ENCODE measurements at regions of chr3 and their contacts with region 1.

Region 1: DNA sequence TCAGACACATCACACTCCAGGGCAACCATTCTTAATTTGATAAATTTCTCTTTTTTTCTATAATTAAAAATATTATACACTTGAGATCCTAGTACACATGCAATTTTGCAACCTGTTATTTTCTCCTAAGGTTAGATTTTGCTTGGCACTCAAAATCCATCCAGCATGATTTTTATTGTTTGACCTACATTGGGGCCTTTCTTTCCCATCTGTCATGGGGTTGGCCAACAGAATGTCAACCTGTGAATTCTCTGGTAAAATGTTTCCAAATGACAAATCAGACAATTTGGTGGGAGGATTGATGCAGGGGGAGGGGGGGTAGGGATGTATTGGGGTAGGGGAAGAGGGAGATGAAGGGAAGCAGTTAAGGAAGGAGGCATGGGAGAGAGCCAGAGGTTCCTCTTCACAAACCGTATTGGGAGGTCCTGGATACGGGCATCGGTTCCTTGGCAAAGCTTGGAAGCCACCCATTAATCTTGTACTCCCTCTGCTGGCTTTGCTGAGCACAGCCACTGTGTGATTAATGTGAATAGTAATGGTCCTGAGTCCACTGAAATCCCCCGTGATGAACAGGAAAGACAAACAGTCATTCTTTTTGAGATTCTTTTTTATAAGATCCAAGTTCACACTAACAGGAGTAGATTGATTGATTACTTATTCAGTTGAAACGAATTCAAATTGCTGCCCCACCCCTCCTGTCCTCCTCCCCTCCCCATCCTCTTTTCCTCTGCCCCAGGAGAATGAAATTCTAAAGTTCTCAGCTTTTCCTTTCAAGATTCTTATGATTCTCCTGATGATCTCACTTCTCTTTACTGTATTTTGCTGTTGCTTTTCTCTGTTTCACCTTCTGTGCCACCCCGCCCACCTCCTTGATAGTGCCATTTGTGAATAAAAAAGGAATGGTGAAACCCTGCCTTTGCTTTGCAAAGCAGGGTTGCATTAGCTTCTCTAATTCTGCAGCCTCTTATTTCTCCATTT is 82.2 kb upstream of the SLC25A26 start:
- DNase-seq: peak; percentile 72
- H3K4me3 ChIP-seq: no peak overlapping the region
- H3K27ac ChIP-seq: no peak overlapping the region
- H3K4me1 ChIP-seq: peaks cover 10% of the 10 kb centered on the region
- H3K27me3 ChIP-seq: peaks cover 3 to 4% of the 10 kb centered on the region in 2 experiments
- CTCF ChIP-seq: peak; percentile 75 to 81
- POLR2A ChIP-seq: no peak

Region 2: GRCh38 chr3:65785065-65785645 is 353.5 kb before region 1 on chr3:
- CTCF ChIA-PET with region 1: interaction called, 9 read pairs
- POLR2A ChIA-PET with region 1: no interaction called
- dilution Hi-C with region 1: no loop called
- intact Hi-C with region 1: loop called (anchors 1 kb)
- DNase-seq: peak; percentile 73
- H3K4me3 ChIP-seq: no peak overlapping the region
- H3K27ac ChIP-seq: no peak overlapping the region
- H3K4me1 ChIP-seq: no peaks in the 10 kb centered on the region
- H3K27me3 ChIP-seq: no peaks in the 10 kb centered on the region
- CTCF ChIP-seq: peak; percentile 25 to 41
- POLR2A ChIP-seq: no peak

Region 3: GRCh38 chr3:65806600-65806999 is 332.0 kb before region 1 on chr3:
- CTCF ChIA-PET with region 1: no interaction called
- POLR2A ChIA-PET with region 1: no interaction called
- dilution Hi-C with region 1: no loop called
- intact Hi-C with region 1: loop called (anchors 5 kb)
- DNase-seq: peak; percentile 19
- H3K4me3 ChIP-seq: no peak overlapping the region
- H3K27ac ChIP-seq: no peak overlapping the region
- H3K4me1 ChIP-seq: no peaks in the 10 kb centered on the region
- H3K27me3 ChIP-seq: no peaks in the 10 kb centered on the region
- CTCF ChIP-seq: no peak
- POLR2A ChIP-seq: no peak

Region 4: DNA sequence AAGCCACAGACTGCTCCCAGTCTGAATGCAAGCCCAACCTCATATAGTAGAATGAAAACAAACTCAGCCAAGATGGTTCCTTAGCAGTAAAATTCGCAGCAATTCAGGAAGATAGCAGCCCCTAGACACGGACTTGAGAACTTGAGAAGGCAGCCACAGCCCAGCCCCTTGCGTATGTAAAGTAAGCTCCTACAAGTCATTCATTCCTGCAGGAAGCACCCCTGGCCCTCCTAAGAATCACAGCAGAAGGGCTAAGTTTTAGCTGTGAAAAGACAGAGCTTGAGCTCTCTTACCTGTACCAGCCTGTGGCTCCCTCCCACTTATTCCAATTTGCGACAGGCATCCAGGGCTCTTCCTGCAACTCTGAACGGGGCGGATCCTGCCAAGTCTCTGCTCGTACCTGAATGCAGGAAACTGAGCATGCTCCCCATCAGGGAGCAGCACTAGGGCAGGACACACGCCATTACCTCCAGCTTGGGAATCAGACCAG is 236.3 kb before region 1 on chr3:
- CTCF ChIA-PET with region 1: no interaction called
- POLR2A ChIA-PET with region 1: no interaction called
- dilution Hi-C with region 1: no loop called
- intact Hi-C with region 1: loop called (anchors 5 kb)
- DNase-seq: no peak
- H3K4me3 ChIP-seq: no peak overlapping the region
- H3K27ac ChIP-seq: no peak overlapping the region
- H3K4me1 ChIP-seq: peaks cover 37% of the 10 kb centered on the region
- H3K27me3 ChIP-seq: no peaks in the 10 kb centered on the region
- CTCF ChIP-seq: no peak
- POLR2A ChIP-seq: no peak

Region 5: GRCh38 chr3:66195347-66195783 is 56.7 kb after region 1 on chr3:
- CTCF ChIA-PET with region 1: interaction called, 3 read pairs
- POLR2A ChIA-PET with region 1: no interaction called
- dilution Hi-C with region 1: no loop called
- intact Hi-C with region 1: loop called (anchors 2 kb)
- DNase-seq: peak; percentile 59
- H3K4me3 ChIP-seq: peak overlapping the region in 1 of 3 experiments; percentile 9
- H3K27ac ChIP-seq: no peak overlapping the region
- H3K4me1 ChIP-seq: peaks cover 3% of the 10 kb centered on the region
- H3K27me3 ChIP-seq: peaks cover 1 to 8% of the 10 kb centered on the region in 2 experiments
- CTCF ChIP-seq: peak; percentile 10 to 20
- POLR2A ChIP-seq: no peak

Region 6: GRCh38 chr3:66615643-66616301 is 477.1 kb after region 1 on chr3:
- CTCF ChIA-PET with region 1: no interaction called
- POLR2A ChIA-PET with region 1: no interaction called
- dilution Hi-C with region 1: no loop called
- intact Hi-C with region 1: no loop called
- DNase-seq: no peak
- H3K4me3 ChIP-seq: no peak overlapping the region
- H3K27ac ChIP-seq: no peak overlapping the region
- H3K4me1 ChIP-seq: no peaks in the 10 kb centered on the region
- H3K27me3 ChIP-seq: no peaks in the 10 kb centered on the region
- CTCF ChIP-seq: no peak
- POLR2A ChIP-seq: no peak